Activated naive CD4-positive, alpha-beta T cell treated with anti-CD3 and anti-CD28 coated beads for 36 hours (primary cell): ENCODE measurements at regions of chr4 and their contacts with region 1.

Region 1: DNA sequence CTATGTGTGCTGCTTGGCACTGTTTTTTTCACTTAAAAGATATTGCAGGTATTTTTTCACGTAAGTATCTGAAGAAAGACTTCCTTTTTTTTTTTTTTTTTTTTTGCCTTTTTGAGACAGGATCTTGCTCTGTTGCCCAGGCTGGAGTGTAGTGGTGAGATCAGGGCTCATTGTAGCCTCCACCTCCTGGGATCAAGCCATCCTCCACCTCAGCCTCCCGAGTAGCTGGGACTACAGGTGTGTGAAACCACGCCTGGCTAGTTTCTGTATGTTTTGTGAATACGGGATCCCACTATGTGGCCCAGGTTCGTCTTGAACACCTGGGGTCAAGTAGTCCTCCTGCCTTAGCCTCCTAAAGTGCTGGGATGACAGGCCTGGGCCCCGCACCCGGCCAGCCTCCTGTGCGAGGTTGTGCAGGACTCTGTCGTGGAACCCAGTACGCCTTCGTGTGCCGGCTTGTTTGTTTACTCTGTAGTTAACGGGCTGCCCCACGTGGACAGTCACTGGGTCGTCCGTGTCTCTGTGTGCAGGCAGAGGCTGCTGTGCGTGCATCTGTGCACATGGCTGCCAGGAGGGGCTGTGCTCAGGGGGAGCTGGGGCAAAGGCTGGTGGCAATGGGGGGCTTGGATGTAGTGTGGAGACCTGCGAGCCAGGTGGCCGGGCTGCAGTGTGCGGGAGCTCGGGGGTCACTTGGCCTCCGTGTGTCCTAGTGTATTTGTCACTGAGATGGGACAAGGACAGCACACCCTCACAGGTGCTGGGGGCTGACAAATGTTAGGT is 179.5 kb downstream of the ADRA2C start:
- DNase-seq: no peak
- H3K4me3 Mint-ChIP-seq: no peak overlapping the region
- H3K27ac Mint-ChIP-seq: no peak overlapping the region
- H3K4me1 Mint-ChIP-seq: peaks cover 7% of the 10 kb centered on the region
- H3K27me3 Mint-ChIP-seq: no peaks in the 10 kb centered on the region

Region 2: GRCh38 chr4:3531879-3532713 is 413.6 kb before region 1 on chr4 and contains the start of gene LRPAP1:
- CTCF ChIA-PET with region 1: no interaction called
- intact Hi-C with region 1: loop called (anchors 10 kb)
- DNase-seq: peak; percentile 83
- H3K4me3 Mint-ChIP-seq: peak within 1 kb of the TSS; percentile 100
- H3K27ac Mint-ChIP-seq: peak within 1 kb of the TSS; percentile 90
- H3K4me1 Mint-ChIP-seq: peaks cover 32% of the 10 kb centered on the region
- H3K27me3 Mint-ChIP-seq: peaks cover 6% of the 10 kb centered on the region
- total RNA-seq, gene LRPAP1: 50.2 TPM